Heart left ventricle (tissue), 16 donors: ENCODE measurements at regions of chr1 and their contacts with region 1.

Region 1: GRCh38 chr1:162349635-162350330 is 26.9 kb downstream of the SPATA46 start:
- DNase-seq: no peak
- ATAC-seq: peak in 1 of 4 donors; percentile 20
- H3K4me3 ChIP-seq: no peak overlapping the region
- H3K27ac ChIP-seq: no peak overlapping the region
- H3K4me1 ChIP-seq: peaks cover 0 to 12% (median 0%) of the 10 kb centered on the region in 12 donors
- H3K27me3 ChIP-seq: no peaks in the 10 kb centered on the region
- CTCF ChIP-seq: no peak
- POLR2A ChIP-seq: no peak

Region 2: DNA sequence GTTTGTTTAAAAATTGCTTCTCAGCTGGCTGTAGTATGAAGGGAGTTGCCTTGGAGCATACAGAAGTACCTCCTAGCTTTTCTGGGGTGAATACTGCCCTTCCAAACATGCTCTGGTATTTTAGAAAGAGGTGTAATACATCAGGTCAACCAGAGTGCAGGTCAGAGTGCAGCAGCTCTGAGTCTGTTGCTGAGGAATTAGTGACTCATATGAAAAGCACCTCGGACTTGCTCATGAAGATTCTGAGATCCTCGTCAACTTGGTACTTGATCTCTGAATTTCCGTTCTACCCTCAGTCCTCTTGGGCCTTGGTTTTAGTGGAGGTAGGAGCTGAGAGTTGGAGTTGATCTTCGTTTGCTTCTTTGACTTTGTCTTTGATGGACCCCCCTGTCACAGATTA is 213.0 kb before region 1 on chr1:
- intact Hi-C with region 1: no loop called
- DNase-seq: no peak
- ATAC-seq: peak in 2 of 4 donors; percentile 45 to 50
- H3K4me3 ChIP-seq: no peak overlapping the region
- H3K27ac ChIP-seq: no peak overlapping the region
- H3K4me1 ChIP-seq: peaks cover 0 to 62% (median 16%) of the 10 kb centered on the region in 12 donors
- H3K27me3 ChIP-seq: no peaks in the 10 kb centered on the region
- CTCF ChIP-seq: no peak
- POLR2A ChIP-seq: no peak

Region 3: DNA sequence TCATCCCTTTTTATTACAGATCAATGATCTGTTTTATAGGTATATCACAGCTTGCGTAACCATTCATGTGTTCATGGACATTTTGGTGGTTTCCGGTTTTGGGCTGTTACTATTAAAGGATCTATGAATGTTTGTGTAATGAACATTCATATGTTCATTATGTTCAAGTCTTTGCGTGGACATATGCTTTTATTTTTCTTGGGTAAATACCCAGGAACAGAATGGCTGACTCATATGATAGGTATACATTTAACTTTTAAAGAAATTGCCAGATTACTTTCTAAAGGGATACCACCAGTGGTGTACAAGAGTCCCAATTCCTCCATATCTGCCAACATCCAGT is 46.8 kb before region 1 on chr1:
- intact Hi-C with region 1: loop called in 1 of 10 experiments (anchors 5 kb)
- DNase-seq: no peak
- ATAC-seq: no peak
- H3K4me3 ChIP-seq: no peak overlapping the region
- H3K27ac ChIP-seq: no peak overlapping the region
- H3K4me1 ChIP-seq: no peaks in the 10 kb centered on the region
- H3K27me3 ChIP-seq: no peaks in the 10 kb centered on the region
- CTCF ChIP-seq: no peak
- POLR2A ChIP-seq: no peak

Region 4: DNA sequence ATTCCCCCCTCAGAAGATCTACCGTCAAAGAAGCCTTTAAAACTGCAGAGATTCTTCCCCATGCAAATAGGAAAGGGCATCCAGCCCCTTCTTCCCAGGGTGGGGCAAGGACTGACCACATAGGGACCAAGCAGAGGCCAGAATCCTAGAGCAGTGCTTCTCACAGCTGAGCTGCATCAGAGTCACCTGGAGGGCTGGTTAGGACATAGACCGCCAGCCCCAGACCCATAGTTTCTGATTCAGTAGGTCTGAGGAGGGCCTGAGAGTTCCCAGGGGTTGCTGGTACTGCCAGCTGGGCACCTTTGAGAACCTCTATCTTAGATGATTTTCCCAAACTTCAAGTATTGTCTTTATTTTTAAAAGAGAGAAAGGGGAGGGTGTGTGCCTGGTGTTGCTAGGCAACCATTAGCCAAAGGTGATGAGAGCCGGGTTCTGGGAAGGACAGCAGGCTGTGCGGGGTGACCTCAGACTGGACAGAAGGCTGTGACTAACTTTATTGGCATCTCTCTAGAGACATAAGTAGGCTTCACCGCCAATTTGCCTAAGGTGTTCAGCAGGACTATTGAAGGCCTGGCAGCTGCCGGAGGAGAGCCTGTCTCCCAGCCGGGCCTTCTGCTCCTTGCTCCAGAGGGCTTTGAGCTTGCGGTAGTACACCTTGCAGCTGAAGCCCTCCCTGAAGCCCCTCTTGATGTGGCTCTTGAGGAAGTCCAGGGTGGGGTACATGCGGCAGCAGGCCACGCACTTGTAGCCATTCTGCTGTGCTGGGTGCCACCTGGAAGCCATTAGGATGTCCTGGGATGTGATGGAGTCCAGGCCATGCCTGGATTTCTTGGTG is 24.0 kb after region 1 on chr1:
- intact Hi-C with region 1: no loop called
- DNase-seq: no peak
- ATAC-seq: no peak
- H3K4me3 ChIP-seq: no peak overlapping the region
- H3K27ac ChIP-seq: no peak overlapping the region
- H3K4me1 ChIP-seq: peaks cover 0 to 6% (median 0%) of the 10 kb centered on the region in 12 donors
- H3K27me3 ChIP-seq: no peaks in the 10 kb centered on the region
- CTCF ChIP-seq: no peak
- POLR2A ChIP-seq: no peak